ENCODE measurements at regions of chrX and their contacts with region 1.

Region 1: DNA sequence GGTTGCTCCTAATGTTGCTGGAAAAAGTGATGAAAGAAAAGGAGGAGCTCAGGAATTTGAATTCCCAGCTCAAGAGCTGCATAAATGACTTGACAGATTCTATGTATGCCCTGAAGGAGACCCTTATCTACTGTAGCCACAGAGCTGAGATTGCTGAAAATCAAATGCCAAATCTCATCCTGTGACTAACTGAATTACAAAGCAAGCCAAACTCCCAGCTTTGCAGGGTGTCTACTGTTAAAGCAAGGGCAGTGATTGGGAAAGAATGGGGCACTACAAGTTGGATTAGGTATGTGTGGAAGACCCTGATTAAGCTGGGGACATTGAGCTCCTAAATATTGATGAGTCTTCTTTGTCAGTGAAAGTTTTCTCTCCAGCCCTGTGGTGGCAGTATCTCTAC is 20.8 kb upstream of the SMIM9 start:
- DNase-seq: no peak
- ATAC-seq: no peak
- H3K4me3 ChIP-seq: no peak overlapping the region
- H3K4me3 Mint-ChIP-seq: no peak overlapping the region
- H3K27ac ChIP-seq: no peak overlapping the region
- H3K27ac Mint-ChIP-seq: no peak overlapping the region
- H3K4me1 ChIP-seq: no peaks in the 10 kb centered on the region
- H3K4me1 Mint-ChIP-seq: no peaks in the 10 kb centered on the region
- H3K27me3 ChIP-seq: no peaks in the 10 kb centered on the region
- H3K27me3 Mint-ChIP-seq: no peaks in the 10 kb centered on the region
- CTCF ChIP-seq: no peak

Region 2: DNA sequence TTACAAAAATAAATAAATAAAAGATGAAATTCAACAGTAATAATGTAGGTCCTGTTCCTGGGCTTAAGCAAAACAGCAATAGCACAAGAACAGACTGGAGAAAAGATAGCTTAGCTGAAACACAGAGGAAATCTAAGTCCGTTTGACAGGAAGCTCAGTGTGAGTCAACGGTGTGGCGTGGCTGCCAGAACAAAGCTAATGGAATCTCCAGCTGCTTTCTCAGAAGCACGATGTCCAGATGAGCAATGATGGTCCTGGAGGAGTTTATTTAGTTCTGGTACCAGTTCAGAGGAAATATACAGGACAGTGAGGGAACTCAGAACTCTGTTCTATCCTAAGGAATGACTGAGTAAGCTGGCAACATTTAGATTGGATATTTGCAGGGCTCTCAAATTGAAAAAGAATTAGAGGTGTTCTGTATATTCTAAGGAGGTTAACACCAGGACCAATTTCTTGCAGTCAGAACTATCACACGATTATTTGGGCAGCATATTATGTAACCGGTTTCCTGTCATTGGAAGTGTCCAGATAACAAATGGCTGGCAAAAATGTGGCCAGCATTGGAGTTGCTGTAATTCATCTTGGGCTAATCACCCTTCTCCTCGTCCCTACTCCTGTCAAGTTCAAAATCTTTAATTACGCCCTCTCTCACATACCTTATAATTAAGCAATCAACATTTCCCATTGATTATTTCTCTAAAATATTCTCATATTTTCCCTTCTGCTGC is 117.1 kb before region 1 on chrX:
- CTCF ChIA-PET with region 1: no interaction called
- POLR2A ChIA-PET with region 1: no interaction called
- intact Hi-C with region 1: no loop called
- DNase-seq: peak in 4 of 9 experiments; percentile 22 to 69 (median 43)
- ATAC-seq: no peak
- H3K4me3 ChIP-seq: peak overlapping the region in 1 of 2 experiments; percentile 13
- H3K4me3 Mint-ChIP-seq: peak overlapping the region; percentile 53
- H3K27ac ChIP-seq: peak overlapping the region in 1 of 2 experiments; percentile 84
- H3K27ac Mint-ChIP-seq: peak overlapping the region; percentile 79
- H3K4me1 ChIP-seq: peaks cover 61% of the 10 kb centered on the region
- H3K4me1 Mint-ChIP-seq: peaks cover 78% of the 10 kb centered on the region
- H3K27me3 ChIP-seq: no peaks in the 10 kb centered on the region
- H3K27me3 Mint-ChIP-seq: no peaks in the 10 kb centered on the region
- CTCF ChIP-seq: no peak

Region 3: DNA sequence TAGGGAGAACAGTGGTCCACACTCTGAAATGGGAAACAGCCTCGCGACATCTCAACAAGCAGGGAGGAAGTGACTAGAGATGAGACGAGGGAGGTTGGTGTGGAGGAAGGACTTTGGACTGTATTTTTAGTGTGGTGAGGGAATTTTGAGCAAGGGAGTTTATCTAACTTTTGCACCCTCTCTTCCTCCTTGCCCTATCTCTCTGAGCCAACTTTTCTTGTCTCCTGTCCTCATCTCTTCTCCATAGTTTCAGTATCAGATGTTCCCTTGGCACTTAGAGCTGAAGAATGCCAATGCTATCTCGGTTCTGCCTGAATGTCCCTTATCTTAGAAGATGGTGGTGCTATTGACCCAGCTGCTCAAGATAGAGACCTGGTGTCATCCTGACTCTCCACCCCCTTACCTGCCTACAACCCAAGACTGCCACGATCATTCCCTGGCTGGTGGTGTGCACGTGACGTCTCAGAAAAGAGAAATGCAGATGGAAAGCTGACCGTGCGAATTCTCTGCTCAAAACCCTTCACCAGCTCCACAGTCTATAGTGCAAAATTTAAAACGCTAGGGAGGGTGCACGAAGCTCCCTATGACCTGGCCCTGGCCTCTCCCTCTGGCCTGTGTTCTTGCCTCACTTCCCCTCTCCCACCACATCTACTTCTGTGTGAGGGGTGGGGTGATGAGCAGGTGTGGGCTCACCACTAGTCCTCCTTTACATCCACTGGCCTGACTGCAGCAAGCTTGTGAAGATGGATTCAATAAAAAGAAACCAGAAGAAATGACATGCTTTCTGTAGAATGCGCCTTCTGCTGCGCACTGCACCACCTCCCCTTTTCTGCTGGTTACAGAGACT is 70.9 kb before region 1 on chrX:
- CTCF ChIA-PET with region 1: no interaction called
- POLR2A ChIA-PET with region 1: no interaction called
- intact Hi-C with region 1: loop called in 1 of 2 experiments (anchors 2 kb)
- DNase-seq: no peak
- ATAC-seq: no peak
- H3K4me3 ChIP-seq: peak overlapping the region; percentile 12 to 35
- H3K4me3 Mint-ChIP-seq: peak overlapping the region; percentile 79
- H3K27ac ChIP-seq: no peak overlapping the region
- H3K27ac Mint-ChIP-seq: peak overlapping the region; percentile 84
- H3K4me1 ChIP-seq: peaks cover 5% of the 10 kb centered on the region
- H3K4me1 Mint-ChIP-seq: peaks cover 14% of the 10 kb centered on the region
- H3K27me3 ChIP-seq: no peaks in the 10 kb centered on the region
- H3K27me3 Mint-ChIP-seq: no peaks in the 10 kb centered on the region
- CTCF ChIP-seq: no peak

Region 4: DNA sequence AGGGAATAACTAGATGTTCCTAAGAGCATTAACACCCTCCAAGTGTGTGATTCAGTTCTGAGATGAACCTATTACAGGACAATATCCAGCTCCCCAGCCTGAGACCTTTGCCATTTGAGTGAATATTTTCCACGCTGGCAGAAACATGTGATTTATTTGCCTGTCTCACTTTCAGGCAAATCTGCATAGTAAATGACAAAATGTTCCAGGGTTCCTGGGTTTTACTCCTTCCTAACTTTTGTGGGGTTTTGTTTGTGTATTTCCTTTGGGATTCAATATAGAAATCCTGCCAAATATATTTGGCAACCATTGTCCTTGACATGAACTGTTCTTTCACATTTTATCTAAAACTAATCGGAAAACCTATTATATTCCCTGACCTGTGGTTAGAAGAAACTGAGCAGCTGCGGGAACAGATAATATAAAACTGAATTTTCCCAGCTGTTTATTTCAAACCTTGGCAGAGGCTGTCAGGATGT is 154.8 kb after region 1 on chrX:
- CTCF ChIA-PET with region 1: no interaction called
- POLR2A ChIA-PET with region 1: no interaction called
- intact Hi-C with region 1: no loop called
- DNase-seq: no peak
- ATAC-seq: no peak
- H3K4me3 ChIP-seq: no peak overlapping the region
- H3K4me3 Mint-ChIP-seq: no peak overlapping the region
- H3K27ac ChIP-seq: no peak overlapping the region
- H3K27ac Mint-ChIP-seq: no peak overlapping the region
- H3K4me1 ChIP-seq: no peaks in the 10 kb centered on the region
- H3K4me1 Mint-ChIP-seq: no peaks in the 10 kb centered on the region
- H3K27me3 ChIP-seq: no peaks in the 10 kb centered on the region
- H3K27me3 Mint-ChIP-seq: no peaks in the 10 kb centered on the region
- CTCF ChIP-seq: no peak